Ovary (tissue), 10 donors: ENCODE measurements at regions of chr15 and their contacts with region 1.

Region 1: DNA sequence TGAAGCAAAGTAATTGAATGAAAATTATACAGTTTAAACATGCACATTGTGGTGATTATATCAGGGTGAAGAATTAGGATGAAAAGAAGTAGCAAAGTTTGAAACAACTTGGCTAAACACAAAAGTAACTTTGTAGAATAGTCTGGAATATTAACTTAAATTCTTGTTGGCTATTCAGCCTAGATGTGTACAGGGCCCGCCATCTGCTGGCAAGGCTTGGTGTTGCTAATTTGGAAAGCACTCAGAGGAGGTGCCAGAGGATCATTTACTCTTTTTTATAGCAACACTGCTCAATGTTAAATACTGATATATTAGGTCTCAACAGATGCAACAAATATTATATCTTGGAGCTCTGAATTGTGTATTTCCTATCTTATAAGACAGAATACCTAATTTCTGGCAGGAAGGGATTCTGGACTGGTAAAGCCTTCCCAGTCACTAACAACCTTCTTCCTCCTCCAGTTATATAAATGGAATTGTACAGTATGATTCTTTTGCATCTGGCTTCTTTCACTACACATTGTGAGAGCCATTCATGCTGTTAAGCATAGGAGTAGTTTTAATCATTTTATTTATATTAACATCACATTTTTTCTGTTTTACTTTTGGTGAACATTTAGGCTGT is 36.1 kb downstream of the TTC23 start:
- DNase-seq: peak; percentile 74 to 88 (median 85)
- H3K4me3 ChIP-seq: no peak overlapping the region
- H3K27ac ChIP-seq: no peak overlapping the region
- H3K4me1 ChIP-seq: no peaks in the 10 kb centered on the region
- H3K27me3 ChIP-seq: no peaks in the 10 kb centered on the region
- CTCF ChIP-seq: peak; percentile 78 to 80 (median 79)
- EP300 ChIP-seq: no peak
- POLR2A ChIP-seq: no peak

Region 2: GRCh38 chr15:99096894-99097426 is 116.3 kb before region 1 on chr15:
- intact Hi-C with region 1: loop called in 2 of 4 experiments (anchors 5 to 10 kb)
- DNase-seq: no peak
- H3K4me3 ChIP-seq: no peak overlapping the region
- H3K27ac ChIP-seq: no peak overlapping the region
- H3K4me1 ChIP-seq: no peaks in the 10 kb centered on the region
- H3K27me3 ChIP-seq: no peaks in the 10 kb centered on the region
- CTCF ChIP-seq: no peak
- EP300 ChIP-seq: no peak
- POLR2A ChIP-seq: no peak